Psoas muscle (tissue), 8 donors: ENCODE measurements at regions of chr12 and their contacts with region 1.

Region 1: GRCh38 chr12:27243804-27244683 is at the start of gene STK38L:
- DNase-seq: peak; percentile 98
- ATAC-seq: peak; percentile 98 to 99 (median 98)
- H3K4me3 ChIP-seq: peak within 1 kb of the TSS; percentile 99
- H3K27ac ChIP-seq: peak within 1 kb of the TSS; percentile 81
- H3K4me1 ChIP-seq: peaks cover 13% of the 10 kb centered on the region
- H3K27me3 ChIP-seq: no peaks in the 10 kb centered on the region
- CTCF ChIP-seq: no peak
- total RNA-seq, gene STK38L: 16.3 to 21.2 (median 18.6) TPM

Region 2: GRCh38 chr12:27064397-27065342 is 179.4 kb before region 1 on chr12:
- intact Hi-C with region 1: no loop called
- DNase-seq: no peak
- ATAC-seq: no peak
- H3K4me3 ChIP-seq: no peak overlapping the region
- H3K27ac ChIP-seq: no peak overlapping the region
- H3K4me1 ChIP-seq: no peaks in the 10 kb centered on the region
- H3K27me3 ChIP-seq: no peaks in the 10 kb centered on the region
- CTCF ChIP-seq: no peak

Region 3: GRCh38 chr12:27112891-27113290 is 131.2 kb before region 1 on chr12:
- intact Hi-C with region 1: no loop called
- DNase-seq: no peak
- ATAC-seq: no peak
- H3K4me3 ChIP-seq: no peak overlapping the region
- H3K27ac ChIP-seq: no peak overlapping the region
- H3K4me1 ChIP-seq: no peaks in the 10 kb centered on the region
- H3K27me3 ChIP-seq: no peaks in the 10 kb centered on the region
- CTCF ChIP-seq: no peak

Region 4: DNA sequence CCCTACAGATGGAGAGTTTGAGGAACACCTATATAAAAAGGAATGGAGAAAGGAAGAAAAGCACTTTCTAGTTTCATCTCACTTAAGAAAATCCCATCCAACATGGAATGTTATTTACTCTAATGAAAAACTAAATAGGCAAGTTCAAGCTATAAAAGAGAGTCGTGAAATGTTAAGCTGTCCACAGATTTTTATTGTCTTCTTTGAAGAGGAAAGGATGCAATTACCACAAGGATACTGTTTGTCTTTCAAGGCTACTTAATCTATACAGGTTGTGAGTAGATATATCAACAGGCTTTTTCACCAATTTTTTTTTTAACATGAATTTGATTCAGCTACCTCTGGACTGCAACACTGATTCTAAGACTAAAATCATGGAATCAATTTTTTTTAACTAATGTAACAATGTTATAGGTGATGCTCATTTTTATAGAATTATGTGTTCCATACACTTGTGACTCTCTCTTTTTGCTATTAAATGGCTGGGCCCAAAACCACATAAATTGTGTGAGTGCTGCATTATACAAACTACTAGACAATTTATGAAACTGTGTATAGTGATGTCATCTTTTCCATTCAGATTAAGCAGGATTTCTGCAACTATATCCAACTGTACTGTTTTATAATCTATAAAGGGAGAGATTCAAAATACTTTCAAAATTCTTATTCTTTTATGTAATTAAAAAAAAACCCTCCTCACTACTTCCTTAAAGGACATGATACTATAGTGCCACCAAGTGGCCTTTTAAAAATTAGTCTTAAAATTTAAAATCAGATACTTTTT is 61.8 kb after region 1 on chr12:
- intact Hi-C with region 1: loop called in 1 of 2 experiments (anchors 1 kb)
- DNase-seq: no peak
- ATAC-seq: no peak
- H3K4me3 ChIP-seq: no peak overlapping the region
- H3K27ac ChIP-seq: no peak overlapping the region
- H3K4me1 ChIP-seq: no peaks in the 10 kb centered on the region
- H3K27me3 ChIP-seq: no peaks in the 10 kb centered on the region
- CTCF ChIP-seq: peak; percentile 67